ENCODE measurements at regions of chr7 and their contacts with region 1.

Region 1: GRCh38 chr7:1086588-1087464 is 1.1 kb upstream of the GPER1 start:
- DNase-seq: peak; percentile 90
- CTCF ChIP-seq: peak; percentile 85

Region 2: GRCh38 chr7:966291-967069 is 120.3 kb before region 1 on chr7:
- CTCF ChIA-PET with region 1: no interaction called
- POLR2A ChIA-PET with region 1: no interaction called
- DNase-seq: no peak
- CTCF ChIP-seq: no peak

Region 3: GRCh38 chr7:1076181-1077072 is 10.4 kb before region 1 on chr7:
- CTCF ChIA-PET with region 1: interaction called, 11 read pairs
- POLR2A ChIA-PET with region 1: no interaction called
- DNase-seq: no peak
- CTCF ChIP-seq: no peak

Region 4: GRCh38 chr7:1103009-1103788 is 16.4 kb after region 1 on chr7:
- CTCF ChIA-PET with region 1: interaction called, 73 read pairs
- POLR2A ChIA-PET with region 1: no interaction called
- DNase-seq: peak; percentile 74
- CTCF ChIP-seq: no peak

Region 5: GRCh38 chr7:1114501-1114901 is 27.7 kb after region 1 on chr7:
- CTCF ChIA-PET with region 1: no interaction called
- POLR2A ChIA-PET with region 1: no interaction called
- DNase-seq: no peak
- CTCF ChIP-seq: no peak

Region 6: DNA sequence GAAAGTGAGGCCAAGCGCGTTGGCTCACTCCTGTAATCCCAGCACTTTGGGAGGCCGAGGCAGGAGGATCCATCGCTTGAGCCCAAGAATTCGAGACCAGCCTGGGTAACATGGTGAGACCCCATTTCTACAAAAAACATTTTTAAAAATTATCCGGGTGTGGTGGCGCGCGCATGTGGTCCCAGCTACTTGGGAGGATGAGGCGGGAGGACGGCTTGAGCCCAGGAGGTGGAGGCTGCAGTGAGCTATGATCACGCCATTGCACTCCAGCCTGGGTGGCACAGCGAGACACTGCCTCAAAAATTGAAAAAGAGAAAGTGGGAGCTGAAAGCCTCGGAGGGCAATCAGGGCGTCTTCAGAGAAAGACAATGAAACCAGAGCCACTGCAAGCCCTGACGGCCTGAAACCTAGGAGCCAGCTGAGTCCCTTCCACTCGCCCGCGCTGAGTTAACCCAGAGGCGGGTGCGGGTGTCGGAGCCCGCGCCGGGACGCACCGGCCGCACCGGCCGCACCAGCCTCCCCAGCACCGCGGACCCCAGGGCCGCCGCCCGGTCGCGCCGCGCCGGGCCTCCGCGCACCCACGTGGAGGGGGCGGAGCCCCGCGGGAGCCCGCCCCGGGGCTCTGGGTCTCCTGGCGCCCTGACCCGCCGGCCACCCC is 50.8 kb after region 1 on chr7:
- CTCF ChIA-PET with region 1: interaction called, 15 read pairs
- POLR2A ChIA-PET with region 1: no interaction called
- DNase-seq: no peak
- CTCF ChIP-seq: no peak